ENCODE measurements at regions of chr17 and their contacts with region 1.

Region 1: GRCh38 chr17:21119247-21119918 is 7.4 kb upstream of the DHRS7B start:
- DNase-seq: peak; percentile 51 to 64
- H3K4me3 ChIP-seq: no peak overlapping the region
- H3K27ac ChIP-seq: no peak overlapping the region
- H3K4me1 ChIP-seq: no peaks in the 10 kb centered on the region
- H3K27me3 ChIP-seq: no peaks in the 10 kb centered on the region
- CTCF ChIP-seq: peak; percentile 89

Region 2: DNA sequence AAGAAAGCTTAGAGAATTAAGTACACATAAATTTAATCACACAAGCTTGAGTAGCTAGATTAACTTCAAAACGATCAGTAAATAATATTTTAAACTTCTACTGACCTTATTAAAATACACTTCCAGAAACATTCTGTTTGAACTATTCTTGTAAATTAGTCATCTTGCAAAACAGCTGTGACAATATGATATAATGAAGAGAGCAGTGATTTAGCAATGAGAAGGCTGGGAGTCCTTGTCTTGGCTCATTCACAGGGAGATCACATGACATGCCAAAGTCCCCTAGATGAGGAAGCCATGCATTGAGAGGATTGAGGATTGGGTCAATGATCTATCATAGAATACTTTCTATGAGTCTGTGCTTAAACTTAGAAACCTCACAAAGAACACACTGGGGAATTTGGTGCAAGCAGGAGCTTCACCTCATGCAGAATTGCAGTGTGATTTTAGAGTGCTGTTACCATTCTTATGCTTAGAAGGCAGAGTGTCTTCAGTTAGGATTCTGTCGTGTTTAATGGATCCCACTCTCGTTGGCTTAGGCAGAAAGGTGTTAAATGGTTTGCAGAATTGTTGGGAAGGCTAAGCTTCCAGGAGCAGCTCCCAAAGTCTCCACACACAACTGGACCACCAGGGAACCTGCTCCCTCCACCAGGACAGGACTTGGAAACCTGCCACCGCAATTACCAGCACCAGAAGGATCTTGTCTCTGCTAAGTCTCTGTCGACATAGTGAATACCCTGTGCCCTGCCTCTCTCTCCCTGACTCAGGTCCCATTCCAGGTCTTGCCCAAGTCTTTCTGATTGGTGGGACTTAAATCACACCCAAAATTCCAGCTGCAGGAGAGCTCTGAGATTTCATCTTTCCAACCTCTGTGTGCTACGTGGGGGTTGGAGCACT is 163.7 kb before region 1 on chr17:
- CTCF ChIA-PET with region 1: no interaction called
- POLR2A ChIA-PET with region 1: no interaction called
- intact Hi-C with region 1: no loop called
- DNase-seq: peak in 1 of 2 experiments; percentile 64
- H3K4me3 ChIP-seq: no peak overlapping the region
- H3K27ac ChIP-seq: no peak overlapping the region
- H3K4me1 ChIP-seq: peaks cover 7% of the 10 kb centered on the region; the same call in 1 of the 2 replicates
- H3K27me3 ChIP-seq: peaks cover 13% of the 10 kb centered on the region
- CTCF ChIP-seq: no peak

Region 3: DNA sequence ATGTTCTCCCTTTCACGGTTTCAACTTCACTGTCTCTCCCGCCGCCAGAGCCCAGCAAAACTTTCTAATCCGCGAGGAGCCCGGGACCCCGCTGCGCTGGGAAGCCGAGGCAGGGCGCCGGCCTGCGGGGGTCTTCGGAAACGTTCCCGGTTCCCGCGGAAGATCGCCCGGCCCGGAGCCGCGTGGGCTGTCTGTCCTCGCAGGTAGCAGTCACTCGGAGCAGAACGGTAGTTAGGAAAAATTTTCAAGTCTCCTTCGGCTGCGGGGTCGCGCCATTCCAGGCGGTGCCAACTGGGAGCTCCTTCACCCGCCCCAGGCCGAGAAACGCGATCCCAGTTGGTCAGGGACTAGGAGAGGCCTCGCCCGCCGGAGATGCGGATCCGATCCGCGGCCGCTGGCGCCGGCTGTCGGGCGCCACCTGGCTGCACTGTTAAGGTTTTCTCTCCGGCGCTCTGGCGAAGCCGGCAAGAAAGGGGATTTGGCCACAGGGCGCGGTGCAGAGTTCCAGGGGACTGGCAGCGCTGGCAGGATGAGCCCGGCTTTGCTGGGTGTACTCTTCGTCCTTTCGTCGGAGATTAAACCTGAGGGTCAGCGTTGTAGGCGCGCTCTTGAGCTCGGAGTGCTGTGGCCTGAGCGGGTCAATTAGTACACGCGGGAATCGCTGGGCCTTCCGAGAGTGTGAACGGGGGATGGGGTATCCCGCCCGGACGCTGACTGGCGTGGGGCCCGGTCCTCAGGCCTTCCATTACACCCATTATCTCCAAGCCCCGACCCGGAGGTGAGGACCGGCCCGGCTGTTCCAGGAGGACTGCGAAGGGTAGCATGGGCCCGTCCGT is 392.2 kb after region 1 on chr17:
- CTCF ChIA-PET with region 1: interaction called, 15 read pairs
- POLR2A ChIA-PET with region 1: no interaction called
- intact Hi-C with region 1: loop called (anchors 2 kb)
- DNase-seq: peak; percentile 38 to 67
- H3K4me3 ChIP-seq: no peak overlapping the region
- H3K27ac ChIP-seq: no peak overlapping the region
- H3K4me1 ChIP-seq: 0 out of 2 replicates have a peak, but pooled peaks cover 3% of the 10 kb centered on the region
- H3K27me3 ChIP-seq: peaks cover 25% of the 10 kb centered on the region
- CTCF ChIP-seq: peak; percentile 75